Gastrocnemius medialis (tissue), 4 donors: ENCODE measurements at regions of chr16 and their contacts with region 1.

Region 1: DNA sequence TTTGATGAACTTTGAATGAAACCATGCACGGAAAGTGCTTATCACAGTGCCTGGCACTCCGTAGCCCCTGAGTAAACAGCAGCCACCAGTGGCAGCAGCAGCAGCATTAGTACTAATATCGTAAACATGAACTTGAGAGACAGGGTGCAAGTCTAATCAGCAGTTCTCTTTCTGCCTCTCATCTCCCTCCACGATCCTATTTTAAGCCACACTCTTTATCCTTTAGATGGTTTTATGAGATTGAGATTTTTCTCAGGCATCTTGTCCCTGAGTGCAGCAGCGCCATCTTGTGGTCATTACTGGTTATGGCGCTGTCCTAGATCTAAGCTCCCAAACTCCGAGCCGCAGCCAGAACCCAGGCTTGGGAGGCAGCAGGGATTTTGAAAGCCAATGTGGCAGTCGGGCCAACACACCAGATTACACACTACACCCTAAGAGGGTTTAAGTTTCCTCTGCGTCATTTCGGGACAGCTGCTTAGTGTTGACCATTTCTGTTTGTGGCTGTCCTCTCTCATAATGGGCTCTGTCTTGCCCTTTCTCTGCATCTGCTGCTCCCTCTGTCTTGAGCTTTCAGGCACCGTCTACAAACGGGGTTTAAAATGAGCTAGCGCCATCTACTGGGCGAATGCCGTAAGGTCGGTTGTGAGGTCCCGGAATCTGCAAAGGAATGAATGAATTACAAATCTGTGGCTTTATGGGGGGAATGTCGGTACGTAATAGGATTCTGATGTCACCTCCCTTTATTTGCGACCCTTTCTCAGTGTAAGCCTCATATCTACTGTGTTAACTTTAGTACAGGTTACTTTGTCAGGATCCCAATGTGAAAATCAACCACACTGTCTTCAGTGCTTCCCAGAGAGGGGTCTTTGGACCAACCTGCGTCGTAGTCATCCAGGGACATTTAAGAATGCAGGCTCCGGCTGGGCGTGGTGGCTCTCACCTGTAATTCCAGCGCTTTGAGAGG is 64.5 kb downstream of the CYLD start:
- DNase-seq: peak; percentile 67 to 82
- ATAC-seq: peak; percentile 96 to 98
- H3K4me3 ChIP-seq: peak overlapping the region; percentile 17 to 60 (median 28)
- H3K27ac ChIP-seq: peak overlapping the region; percentile 54 to 81 (median 64)
- H3K4me1 ChIP-seq: peaks cover 3 to 4% of the 10 kb centered on the region in 2 donors
- H3K27me3 ChIP-seq: no peaks in the 10 kb centered on the region
- CTCF ChIP-seq: peak; percentile 87 to 94 (median 92)
- POLR2A ChIP-seq: no peak

Region 2: DNA sequence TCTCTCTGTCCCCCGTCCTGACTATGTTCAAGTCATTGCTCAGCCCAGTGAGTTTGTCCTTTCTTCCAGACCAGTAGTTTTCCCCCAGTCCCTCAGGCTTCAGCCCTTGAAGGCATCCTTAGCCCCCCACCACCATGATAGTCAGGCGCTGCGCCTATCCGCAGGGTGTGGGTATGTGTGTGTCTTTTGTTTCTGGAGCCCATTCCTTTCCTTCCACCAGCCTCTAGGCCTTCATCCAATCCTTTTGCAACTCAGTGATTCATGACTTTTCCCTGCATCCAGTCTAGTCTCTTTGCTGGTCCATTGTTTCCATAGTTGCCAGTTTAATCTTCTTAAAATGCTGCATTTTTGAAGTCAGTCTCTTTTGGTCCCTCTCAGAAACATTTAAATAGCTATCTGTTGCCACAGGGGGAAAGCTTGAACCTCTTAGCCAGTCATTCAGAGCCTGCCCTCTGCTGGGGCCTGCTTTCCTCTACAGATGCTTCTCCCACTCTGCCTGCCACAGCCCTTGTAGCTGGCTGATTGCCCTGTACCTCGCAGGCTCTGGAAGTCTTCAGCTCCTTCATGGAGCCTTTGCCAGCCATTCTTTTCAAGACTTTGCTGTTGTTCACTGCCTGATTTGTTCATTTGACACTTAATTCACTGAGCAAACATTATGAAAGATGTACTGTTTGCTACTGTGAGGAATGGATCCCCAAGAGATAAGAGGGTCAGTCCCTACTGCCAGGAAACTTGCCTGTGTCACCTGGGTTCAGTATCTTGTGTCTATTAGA is 595.9 kb before region 1 on chr16:
- in situ Hi-C with region 1: no loop called
- intact Hi-C with region 1: loop called (anchors 10 kb)
- DNase-seq: peak; percentile 36 to 63
- ATAC-seq: peak; percentile 48 to 82
- H3K4me3 ChIP-seq: no peak overlapping the region
- H3K27ac ChIP-seq: peak overlapping the region; percentile 35 to 72 (median 50)
- H3K4me1 ChIP-seq: peaks cover 39 to 40% of the 10 kb centered on the region in 2 donors
- H3K27me3 ChIP-seq: no peaks in the 10 kb centered on the region
- CTCF ChIP-seq: peak; percentile 15 to 58 (median 39)
- POLR2A ChIP-seq: no peak

Region 3: GRCh38 chr16:50397196-50397595 is 409.2 kb before region 1 on chr16:
- in situ Hi-C with region 1: loop called in 1 of 4 experiments (anchors 25 kb)
- intact Hi-C with region 1: no loop called
- DNase-seq: no peak
- ATAC-seq: no peak
- H3K4me3 ChIP-seq: no peak overlapping the region
- H3K27ac ChIP-seq: no peak overlapping the region
- H3K4me1 ChIP-seq: no peaks in the 10 kb centered on the region
- H3K27me3 ChIP-seq: no peaks in the 10 kb centered on the region
- CTCF ChIP-seq: no peak
- POLR2A ChIP-seq: no peak

Region 4: DNA sequence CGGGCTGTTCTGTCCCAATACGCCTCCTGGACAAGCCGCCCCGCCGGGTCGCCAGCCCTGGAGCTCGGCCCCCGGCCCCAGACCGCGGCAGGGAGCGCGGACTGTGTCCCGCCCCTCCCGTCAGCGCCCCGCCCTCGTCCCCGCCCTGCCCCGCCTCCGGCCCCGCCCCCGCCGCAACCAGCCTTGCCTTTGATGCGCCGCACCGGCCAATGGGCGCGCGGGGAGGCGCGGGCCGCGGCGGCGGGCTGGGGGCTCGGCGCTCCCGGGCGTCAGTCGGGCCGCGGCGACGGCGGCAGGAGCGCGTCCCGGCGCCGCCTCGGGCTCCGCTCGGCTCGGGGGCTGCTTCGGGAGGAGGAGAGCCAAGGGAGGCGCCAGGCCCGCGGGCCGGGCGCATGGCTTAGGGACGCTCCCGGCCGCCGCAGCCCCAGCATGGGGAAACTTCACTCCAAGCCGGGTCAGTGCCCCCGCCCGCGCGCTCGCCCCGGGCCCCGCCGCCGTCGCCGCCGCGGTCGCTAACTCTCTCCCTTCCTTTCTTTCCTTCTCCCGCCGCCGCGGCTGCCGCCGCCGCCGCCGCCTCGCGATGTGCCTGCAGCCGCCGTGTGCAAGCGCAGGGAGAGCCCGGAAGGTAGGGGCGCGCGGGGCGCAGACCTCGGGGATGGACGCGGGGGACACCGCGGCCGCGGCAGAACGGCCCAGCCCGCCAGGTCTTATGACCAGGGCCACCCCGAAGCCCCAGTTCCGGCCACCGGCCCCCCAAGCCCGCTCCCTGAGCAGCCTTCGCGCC is 258.1 kb before region 1 on chr16 and contains the start of gene NKD1:
- in situ Hi-C with region 1: no loop called
- intact Hi-C with region 1: loop called (anchors 5 kb)
- DNase-seq: peak; percentile 23 to 31
- ATAC-seq: peak; percentile 89 to 91
- H3K4me3 ChIP-seq: peak within 1 kb of the TSS; percentile 51 to 78 (median 66)
- H3K27ac ChIP-seq: no peak within 1 kb of the TSS
- H3K4me1 ChIP-seq: peaks cover 0 to 9% of the 10 kb centered on the region in 2 donors
- H3K27me3 ChIP-seq: peaks cover 6 to 28% (median 16%) of the 10 kb centered on the region in 3 donors
- CTCF ChIP-seq: no peak
- POLR2A ChIP-seq: peak; percentile 54 to 63
- total RNA-seq, gene NKD1: 0.10 to 0.75 (median 0.19) TPM

Region 5: DNA sequence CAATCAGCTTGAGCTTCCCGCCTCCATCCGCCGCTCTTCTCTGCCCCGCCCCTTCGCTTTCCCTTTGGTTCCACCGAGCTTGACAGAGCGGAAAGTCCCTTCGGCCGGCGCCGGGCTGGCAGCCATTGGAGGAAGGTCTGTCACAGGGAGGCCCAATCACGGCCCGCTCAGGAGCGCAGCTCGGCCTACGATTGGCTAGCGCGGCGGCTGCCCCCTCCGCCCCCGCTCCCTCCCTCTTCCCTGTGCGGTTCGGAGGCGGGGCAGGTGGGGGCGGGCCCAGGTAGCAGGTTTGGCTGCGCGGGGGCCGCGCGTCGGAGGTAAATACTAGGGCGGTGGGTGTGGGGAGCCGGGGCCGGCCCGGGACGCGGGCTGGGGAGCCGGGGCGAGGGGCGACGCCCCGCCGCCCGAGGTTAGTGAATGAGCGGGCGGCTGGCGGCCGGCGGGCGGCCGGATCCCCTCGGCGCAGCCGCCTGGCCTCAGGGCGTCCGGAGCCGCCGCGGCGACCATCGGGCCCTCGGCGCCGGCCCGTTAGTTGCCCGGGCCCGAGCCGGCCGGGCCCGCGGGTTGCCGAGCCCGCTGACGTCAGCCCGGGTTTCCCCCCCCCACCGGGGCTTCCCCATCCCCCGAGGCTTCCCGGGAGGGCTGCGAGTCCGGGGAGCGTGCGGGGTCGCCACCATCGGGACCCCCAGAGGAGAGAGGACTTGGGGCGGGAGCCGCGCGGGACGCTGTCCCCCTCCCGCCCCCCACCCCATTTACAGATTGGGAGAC is 64.4 kb before region 1 on chr16 and contains the start of gene CYLD:
- in situ Hi-C with region 1: no loop called
- intact Hi-C with region 1: loop called (anchors 2 kb)
- DNase-seq: peak; percentile 100
- ATAC-seq: peak; percentile 89 to 95
- H3K4me3 ChIP-seq: peak within 1 kb of the TSS; percentile 61 to 98 (median 90)
- H3K27ac ChIP-seq: peak within 1 kb of the TSS; percentile 85 to 99 (median 93)
- H3K4me1 ChIP-seq: peaks cover 29 to 40% of the 10 kb centered on the region in 2 donors
- H3K27me3 ChIP-seq: no peaks in the 10 kb centered on the region
- CTCF ChIP-seq: no peak
- POLR2A ChIP-seq: peak; percentile 88 to 97
- total RNA-seq, gene CYLD: 49.2 to 177 (median 135) TPM

Region 6: DNA sequence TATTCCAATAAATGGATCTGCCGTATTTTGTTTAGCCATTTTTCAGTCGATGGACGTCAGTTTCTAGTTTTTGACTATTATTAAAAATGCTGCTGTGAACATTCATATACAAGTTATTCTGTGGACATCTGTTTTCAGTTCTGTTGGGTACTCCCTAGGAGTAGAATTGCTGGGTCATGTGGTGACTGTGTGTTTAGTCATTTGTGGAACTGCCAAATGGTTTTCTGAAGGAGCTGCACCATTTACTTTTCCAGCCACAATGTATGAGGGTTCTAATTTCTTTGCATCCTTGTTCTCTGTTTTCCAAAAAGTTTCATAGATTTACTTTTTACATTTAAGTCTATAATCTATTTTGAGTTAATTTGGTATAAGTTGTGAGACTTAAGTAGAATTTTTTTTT is 35.0 kb before region 1 on chr16:
- in situ Hi-C with region 1: no loop called
- intact Hi-C with region 1: no loop called
- DNase-seq: no peak
- ATAC-seq: no peak
- H3K4me3 ChIP-seq: no peak overlapping the region
- H3K27ac ChIP-seq: no peak overlapping the region
- H3K4me1 ChIP-seq: peaks cover 3% of the 10 kb centered on the region in 2 donors
- H3K27me3 ChIP-seq: no peaks in the 10 kb centered on the region
- CTCF ChIP-seq: no peak
- POLR2A ChIP-seq: no peak

Region 7: GRCh38 chr16:50821586-50821985 is 15.2 kb after region 1 on chr16:
- in situ Hi-C with region 1: no loop called
- intact Hi-C with region 1: no loop called
- DNase-seq: no peak
- ATAC-seq: no peak
- H3K4me3 ChIP-seq: no peak overlapping the region
- H3K27ac ChIP-seq: no peak overlapping the region
- H3K4me1 ChIP-seq: no peaks in the 10 kb centered on the region
- H3K27me3 ChIP-seq: no peaks in the 10 kb centered on the region
- CTCF ChIP-seq: no peak
- POLR2A ChIP-seq: no peak